ENCODE measurements at regions of chr1 and their contacts with region 1.

Region 1: GRCh38 chr1:47437447-47438164 is at the start of gene FOXD2:
- DNase-seq: peak; percentile 96
- H3K4me3 ChIP-seq: peak within 1 kb of the TSS; percentile 49 to 87
- H3K27ac ChIP-seq: no peak within 1 kb of the TSS
- H3K4me1 ChIP-seq: peaks cover 0 to 10% of the 10 kb centered on the region in 2 experiments; a peak in 1 of 4 replicates
- H3K27me3 ChIP-seq: peaks cover 82% of the 10 kb centered on the region
- CTCF ChIP-seq: peak; percentile 84
- EP300 ChIP-seq: no peak
- RAD21 ChIP-seq: peak; percentile 19; the same call in 1 of the 2 replicates
- polyA plus RNA-seq, gene FOXD2: not detected in 2 replicates

Region 2: DNA sequence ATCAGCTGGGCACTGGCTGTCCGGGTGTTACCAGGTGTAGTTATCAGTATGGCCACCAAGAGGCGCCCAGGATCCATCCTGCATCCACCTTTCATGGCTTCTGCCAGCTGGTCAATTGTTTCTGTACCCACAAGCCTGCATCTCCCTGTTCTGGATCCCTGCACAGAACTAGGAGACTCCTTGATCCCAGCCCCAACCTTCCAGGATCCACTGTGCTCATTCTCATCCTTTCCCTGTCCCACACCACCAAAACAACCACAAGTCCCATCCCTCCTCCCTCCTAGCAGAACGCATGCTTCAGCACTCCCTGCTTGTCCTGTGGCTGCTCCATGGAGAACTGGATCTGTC is 48.7 kb before region 1 on chr1:
- CTCF ChIA-PET with region 1: interaction called, 34 read pairs
- POLR2A ChIA-PET with region 1: no interaction called
- DNase-seq: peak; percentile 80
- H3K4me3 ChIP-seq: no peak overlapping the region
- H3K27ac ChIP-seq: no peak overlapping the region
- H3K4me1 ChIP-seq: peaks cover 0 to 10% of the 10 kb centered on the region in 2 experiments; a peak in 1 of 4 replicates
- H3K27me3 ChIP-seq: no peaks in the 10 kb centered on the region
- CTCF ChIP-seq: peak; percentile 69
- EP300 ChIP-seq: no peak
- RAD21 ChIP-seq: peak; percentile 84

Region 3: DNA sequence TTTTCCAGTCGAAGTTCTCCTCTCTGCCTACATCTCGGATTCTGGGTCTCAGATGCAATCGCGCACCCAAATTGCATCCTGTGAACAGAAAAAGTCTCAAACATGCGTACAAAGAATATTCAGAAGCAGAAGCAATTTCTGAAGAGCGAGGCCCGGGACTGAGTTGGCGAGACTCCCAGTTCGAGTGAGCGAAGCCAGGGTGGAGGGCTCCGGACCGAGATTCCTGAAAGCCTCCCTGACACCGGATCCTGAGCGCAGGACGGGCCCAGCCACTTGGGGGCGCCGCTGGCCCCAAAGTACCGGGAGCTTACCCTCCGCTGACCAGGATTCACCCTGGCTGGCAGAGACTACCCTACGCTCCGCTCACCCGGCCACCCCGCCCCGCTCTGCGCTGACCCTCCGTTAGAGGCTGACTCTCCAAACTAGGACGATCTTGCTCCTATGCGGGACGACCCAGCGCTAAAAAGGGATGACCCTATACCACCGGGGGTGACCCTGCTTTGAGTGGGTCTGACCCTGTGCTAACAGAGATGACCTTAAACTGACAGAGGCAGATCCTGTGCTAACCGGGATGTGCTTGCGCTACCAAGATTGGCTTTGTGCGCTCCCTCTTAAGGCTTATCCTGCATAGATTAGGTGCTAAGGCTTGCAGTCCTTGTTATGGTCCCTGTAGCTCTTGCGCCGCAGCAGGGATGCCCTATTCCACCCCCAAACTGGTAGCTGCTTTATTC is 12.4 kb after region 1 on chr1:
- CTCF ChIA-PET with region 1: interaction called, 94 read pairs
- POLR2A ChIA-PET with region 1: interaction called, 3 read pairs
- DNase-seq: peak; percentile 67
- H3K4me3 ChIP-seq: no peak overlapping the region; a peak in 1 of 4 replicates
- H3K27ac ChIP-seq: no peak overlapping the region
- H3K4me1 ChIP-seq: no peaks in the 10 kb centered on the region; a peak in 1 of 4 replicates
- H3K27me3 ChIP-seq: peaks cover 73% of the 10 kb centered on the region
- CTCF ChIP-seq: peak; percentile 53
- EP300 ChIP-seq: no peak
- RAD21 ChIP-seq: peak; percentile 53

Region 4: DNA sequence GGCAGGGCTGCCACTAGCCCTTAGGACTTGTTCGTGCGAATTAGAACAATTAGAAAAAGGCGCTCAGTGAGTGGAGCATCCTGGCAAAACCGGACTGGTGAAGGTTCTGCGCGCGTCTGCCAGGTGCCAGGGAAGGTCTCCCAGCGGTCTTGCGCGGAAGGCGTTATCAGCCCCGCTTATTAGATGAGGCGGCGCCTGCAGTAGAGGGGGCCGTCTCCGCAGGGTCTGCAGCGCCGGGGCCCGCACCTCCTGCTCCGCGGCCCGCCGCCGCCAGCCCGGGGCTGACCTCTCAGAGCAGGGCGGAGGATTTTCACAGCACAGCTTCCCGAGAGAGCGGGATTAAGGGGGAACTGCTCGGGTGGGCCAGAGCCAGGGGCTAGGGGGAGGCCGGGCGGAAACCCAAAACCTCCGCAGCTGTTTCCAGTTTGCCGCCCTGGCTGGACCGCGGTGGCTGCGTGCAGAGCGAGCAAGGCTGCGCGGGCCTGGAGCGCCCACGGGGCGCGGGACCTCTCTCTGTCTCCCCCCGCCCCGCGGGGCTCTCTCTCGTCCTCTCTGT is 155.5 kb after region 1 on chr1:
- CTCF ChIA-PET with region 1: interaction called, 11 read pairs
- POLR2A ChIA-PET with region 1: no interaction called
- DNase-seq: peak; percentile 78
- H3K4me3 ChIP-seq: peak overlapping the region in 1 of 2 experiments; percentile 23; a peak in 1 of 4 replicates
- H3K27ac ChIP-seq: no peak overlapping the region
- H3K4me1 ChIP-seq: peaks cover 0 to 3% of the 10 kb centered on the region in 2 experiments; a peak in 1 of 4 replicates
- H3K27me3 ChIP-seq: peaks cover 14% of the 10 kb centered on the region; the same call in 1 of the 2 replicates
- CTCF ChIP-seq: no peak
- EP300 ChIP-seq: no peak
- RAD21 ChIP-seq: no peak

Region 5: GRCh38 chr1:47703981-47704596 is 266.5 kb after region 1 on chr1:
- CTCF ChIA-PET with region 1: interaction called, 1,422 read pairs
- POLR2A ChIA-PET with region 1: interaction called, 3 read pairs
- DNase-seq: no peak
- H3K4me3 ChIP-seq: no peak overlapping the region
- H3K27ac ChIP-seq: no peak overlapping the region
- H3K4me1 ChIP-seq: peaks cover 0 to 11% of the 10 kb centered on the region in 2 experiments; a peak in 1 of 4 replicates
- H3K27me3 ChIP-seq: peaks cover 26% of the 10 kb centered on the region
- CTCF ChIP-seq: peak; percentile 43
- EP300 ChIP-seq: no peak
- RAD21 ChIP-seq: peak; percentile 63

Measured in SK-N-SH (cell line).